HEK293 (cell line): ENCODE measurements at regions of chr1 and their contacts with region 1.

Region 1: GRCh38 chr1:22704440-22705067 is 6.1 kb upstream of the EPHB2 start:
- H3K4me3 ChIP-seq: no peak overlapping the region
- H3K27ac ChIP-seq: no peak overlapping the region
- H3K4me1 ChIP-seq: no peaks in the 10 kb centered on the region
- CTCF ChIP-seq: peak; percentile 73

Region 2: GRCh38 chr1:22416555-22417454 is 287.7 kb before region 1 on chr1:
- CTCF ChIA-PET with region 1: interaction called, 10 read pairs
- POLR2A ChIA-PET with region 1: no interaction called
- H3K4me3 ChIP-seq: no peak overlapping the region
- H3K27ac ChIP-seq: no peak overlapping the region
- H3K4me1 ChIP-seq: peaks cover 5% of the 10 kb centered on the region; the same call in 1 of the 2 replicates
- CTCF ChIP-seq: peak; percentile 92

Region 3: GRCh38 chr1:22507587-22507986 is 197.0 kb before region 1 on chr1:
- CTCF ChIA-PET with region 1: no interaction called
- POLR2A ChIA-PET with region 1: no interaction called
- H3K4me3 ChIP-seq: no peak overlapping the region
- H3K27ac ChIP-seq: no peak overlapping the region
- H3K4me1 ChIP-seq: peaks cover 5% of the 10 kb centered on the region; the same call in 1 of the 2 replicates
- CTCF ChIP-seq: no peak

Region 4: GRCh38 chr1:22685591-22686059 is 18.9 kb before region 1 on chr1:
- CTCF ChIA-PET with region 1: interaction called, 11 read pairs
- POLR2A ChIA-PET with region 1: no interaction called
- H3K4me3 ChIP-seq: no peak overlapping the region
- H3K27ac ChIP-seq: no peak overlapping the region
- H3K4me1 ChIP-seq: no peaks in the 10 kb centered on the region
- CTCF ChIP-seq: no peak

Region 5: GRCh38 chr1:22717037-22717760 is 12.6 kb after region 1 on chr1:
- CTCF ChIA-PET with region 1: interaction called, 25 read pairs
- POLR2A ChIA-PET with region 1: no interaction called
- H3K4me3 ChIP-seq: no peak overlapping the region
- H3K27ac ChIP-seq: no peak overlapping the region; the same call in 1 of the 2 replicates
- H3K4me1 ChIP-seq: peaks cover 8% of the 10 kb centered on the region
- CTCF ChIP-seq: no peak

Region 6: GRCh38 chr1:22731924-22732720 is 27.6 kb after region 1 on chr1:
- CTCF ChIA-PET with region 1: interaction called, 16 read pairs
- POLR2A ChIA-PET with region 1: no interaction called
- H3K4me3 ChIP-seq: no peak overlapping the region
- H3K27ac ChIP-seq: no peak overlapping the region
- H3K4me1 ChIP-seq: no peaks in the 10 kb centered on the region
- CTCF ChIP-seq: no peak

Region 7: GRCh38 chr1:22861764-22862440 is 157.3 kb after region 1 on chr1:
- CTCF ChIA-PET with region 1: interaction called, 64 read pairs
- POLR2A ChIA-PET with region 1: interaction called, 3 read pairs
- H3K4me3 ChIP-seq: no peak overlapping the region
- H3K27ac ChIP-seq: no peak overlapping the region
- H3K4me1 ChIP-seq: no peaks in the 10 kb centered on the region
- CTCF ChIP-seq: peak; percentile 29; the same call in 1 of the 2 replicates

Region 8: DNA sequence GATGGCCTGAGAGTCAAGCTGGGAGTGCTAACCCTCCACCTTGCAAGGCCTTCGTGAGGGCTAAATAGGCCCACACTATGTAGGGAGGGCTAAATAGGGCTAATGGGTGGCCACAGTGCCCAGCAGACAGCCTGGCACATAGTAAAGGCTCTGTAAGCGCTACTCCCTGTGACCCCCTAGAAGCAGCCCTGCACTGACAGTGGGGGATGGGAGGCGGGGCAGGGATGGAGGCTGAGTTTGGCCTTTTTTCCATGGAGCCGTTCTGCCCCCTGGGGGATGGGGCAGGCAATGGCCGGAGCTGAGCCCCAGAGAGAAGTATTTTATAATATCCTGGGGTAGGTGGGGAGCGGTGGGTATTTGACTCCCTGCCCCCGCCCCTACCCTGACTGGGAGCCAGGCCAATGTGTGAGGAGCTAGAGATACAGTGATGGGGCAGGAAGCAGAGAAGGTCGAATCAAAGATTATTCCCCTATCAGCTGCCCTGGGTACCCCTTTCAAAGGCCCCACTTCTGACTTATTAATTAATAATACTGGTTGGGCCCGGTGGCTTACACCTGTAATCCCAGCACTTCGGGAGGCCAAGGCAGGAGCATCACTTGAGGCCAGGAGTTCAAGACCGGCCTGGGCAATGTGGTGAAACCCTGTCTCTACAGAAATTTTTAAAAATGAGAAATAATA is 225.8 kb after region 1 on chr1:
- CTCF ChIA-PET with region 1: interaction called, 43 read pairs
- POLR2A ChIA-PET with region 1: no interaction called
- H3K4me3 ChIP-seq: no peak overlapping the region
- H3K27ac ChIP-seq: no peak overlapping the region
- H3K4me1 ChIP-seq: no peaks in the 10 kb centered on the region
- CTCF ChIP-seq: peak; percentile 63